Activated T-helper 2 cell treated with anti-CD3 and anti-CD28 coated beads, Interferon-gamma antibody, Interleukin-2, Interleukin-4, amounts not matched to agents 10 μg/mL and 5 μg/mL and 100 μg/mL, durations not matched to agents 14 hours and 24 hours and 36 hours (primary cell): ENCODE measurements at regions of chr17 and their contacts with region 1.

Region 1: DNA sequence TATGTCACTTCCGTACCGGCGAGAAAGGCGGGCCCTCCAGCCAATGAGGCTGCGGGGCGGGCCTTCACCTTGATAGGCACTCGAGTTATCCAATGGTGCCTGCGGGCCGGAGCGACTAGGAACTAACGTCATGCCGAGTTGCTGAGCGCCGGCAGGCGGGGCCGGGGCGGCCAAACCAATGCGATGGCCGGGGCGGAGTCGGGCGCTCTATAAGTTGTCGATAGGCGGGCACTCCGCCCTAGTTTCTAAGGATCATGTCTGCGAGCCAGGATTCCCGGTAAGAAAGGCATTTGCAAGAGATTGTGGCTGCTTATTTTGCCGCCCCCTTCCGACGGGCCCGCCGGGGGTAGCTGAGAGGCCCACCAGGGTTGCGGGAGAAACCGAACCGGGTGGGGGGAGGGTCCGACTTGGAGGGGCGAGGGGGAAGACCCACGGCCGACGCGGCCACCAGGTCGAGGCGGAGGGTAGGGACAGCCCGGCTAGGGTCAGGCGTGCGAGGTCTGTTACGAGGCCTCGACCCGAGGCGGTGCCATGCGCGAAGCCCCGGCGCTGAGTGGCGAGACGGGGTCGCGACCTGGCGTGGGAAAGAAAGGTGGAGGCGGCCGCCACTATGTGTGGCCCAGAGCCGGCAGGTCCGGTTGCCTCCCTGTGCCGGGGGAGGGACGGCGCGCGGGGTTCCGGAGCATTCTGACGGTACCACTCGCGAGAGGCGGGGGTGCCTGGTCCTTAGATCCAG is 6.7 kb upstream of the CD68 start:
- DNase-seq: peak; percentile 100
- H3K4me3 Mint-ChIP-seq: peak overlapping the region; percentile 93
- H3K27ac Mint-ChIP-seq: peak overlapping the region; percentile 97
- H3K4me1 Mint-ChIP-seq: peaks cover 48% of the 10 kb centered on the region
- H3K27me3 Mint-ChIP-seq: no peaks in the 10 kb centered on the region

Region 2: GRCh38 chr17:7239091-7240027 is 333.4 kb before region 1 on chr17 and contains the start of gene PHF23:
- intact Hi-C with region 1: loop called (anchors 2 kb)
- DNase-seq: peak; percentile 98
- H3K4me3 Mint-ChIP-seq: peak within 1 kb of the TSS; percentile 98
- H3K27ac Mint-ChIP-seq: peak within 1 kb of the TSS; percentile 92
- H3K4me1 Mint-ChIP-seq: peaks cover 48% of the 10 kb centered on the region
- H3K27me3 Mint-ChIP-seq: no peaks in the 10 kb centered on the region
- total RNA-seq, gene PHF23: 43.4 and 47.8 TPM in 2 replicates

Region 3: DNA sequence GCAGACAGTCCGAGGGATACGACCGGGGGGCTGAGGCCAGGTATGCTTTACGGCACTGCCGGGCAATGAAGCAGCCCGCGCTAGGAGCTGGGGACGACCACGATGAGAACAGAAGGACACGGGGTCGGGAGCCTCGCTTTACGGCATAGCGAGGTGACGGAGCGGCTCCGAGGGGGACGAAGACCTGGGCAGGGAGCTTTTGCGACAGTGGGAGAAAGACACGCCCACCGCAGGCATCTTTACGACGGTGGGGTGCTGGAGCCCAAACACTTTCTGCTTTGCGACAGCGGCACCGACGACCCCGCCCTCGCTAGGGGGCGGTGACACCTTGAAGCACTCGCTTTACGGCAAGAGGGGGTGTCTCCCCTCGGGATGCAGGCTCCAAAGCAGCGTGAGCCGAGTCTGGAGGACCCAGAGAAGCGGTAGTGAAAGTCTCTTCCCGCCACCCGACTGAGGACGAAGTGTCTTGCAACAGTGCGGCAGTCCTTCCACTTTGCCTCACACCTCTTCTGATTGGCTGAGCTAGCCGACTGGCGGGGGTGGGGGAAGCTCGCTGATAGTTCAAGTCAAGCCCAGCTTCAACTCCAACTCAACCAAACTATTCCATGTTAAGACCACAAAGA is 243.3 kb before region 1 on chr17:
- intact Hi-C with region 1: loop called (anchors 2 kb)
- DNase-seq: peak; percentile 96
- H3K4me3 Mint-ChIP-seq: peak overlapping the region; percentile 87
- H3K27ac Mint-ChIP-seq: peak overlapping the region; percentile 95
- H3K4me1 Mint-ChIP-seq: peaks cover 26% of the 10 kb centered on the region
- H3K27me3 Mint-ChIP-seq: no peaks in the 10 kb centered on the region

Region 4: DNA sequence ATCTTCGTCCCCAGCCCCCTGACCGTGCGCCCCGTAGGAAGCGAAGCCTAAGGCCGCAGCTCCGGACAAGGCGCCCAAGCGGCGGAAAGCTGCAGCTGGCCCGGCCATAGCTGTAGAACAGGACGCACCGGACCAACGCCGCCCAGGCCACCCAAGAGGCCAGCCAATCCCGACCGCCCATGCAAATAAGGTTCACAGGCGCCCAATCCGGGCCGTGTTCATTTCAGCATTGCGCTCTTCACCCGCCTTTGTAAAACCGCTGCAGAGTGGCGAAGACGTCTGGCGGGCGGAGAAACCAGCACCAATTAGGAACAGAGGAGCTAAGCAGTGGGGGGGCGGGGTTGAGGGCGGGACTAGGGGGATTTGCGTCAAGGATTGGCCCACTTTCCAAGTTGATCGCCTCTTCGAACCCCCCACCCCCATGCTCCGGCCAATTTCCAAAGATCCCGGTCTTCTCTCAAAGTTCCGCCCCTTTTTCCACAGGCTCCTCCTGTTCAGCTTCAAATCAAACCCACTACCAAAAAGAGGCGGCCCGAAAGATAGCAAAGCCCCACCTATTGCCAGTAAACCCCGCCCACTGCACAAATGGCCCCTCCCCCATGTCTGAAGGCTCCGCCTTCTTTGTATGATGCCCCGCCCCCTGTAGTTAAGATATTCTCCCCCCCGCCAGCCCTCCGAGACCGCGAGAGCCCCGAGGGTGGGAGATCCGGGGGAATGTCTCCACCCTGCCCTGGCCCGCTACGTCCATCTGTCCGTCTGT is 168.6 kb before region 1 on chr17 and contains the start of gene TMEM256:
- intact Hi-C with region 1: loop called (anchors 5 kb)
- DNase-seq: peak; percentile 95
- H3K4me3 Mint-ChIP-seq: peak within 1 kb of the TSS; percentile 87
- H3K27ac Mint-ChIP-seq: peak within 1 kb of the TSS; percentile 92
- H3K4me1 Mint-ChIP-seq: peaks cover 11% of the 10 kb centered on the region
- H3K27me3 Mint-ChIP-seq: peaks cover 13% of the 10 kb centered on the region
- total RNA-seq, gene TMEM256: 67.3 and 67.7 TPM in 2 replicates

Region 5: DNA sequence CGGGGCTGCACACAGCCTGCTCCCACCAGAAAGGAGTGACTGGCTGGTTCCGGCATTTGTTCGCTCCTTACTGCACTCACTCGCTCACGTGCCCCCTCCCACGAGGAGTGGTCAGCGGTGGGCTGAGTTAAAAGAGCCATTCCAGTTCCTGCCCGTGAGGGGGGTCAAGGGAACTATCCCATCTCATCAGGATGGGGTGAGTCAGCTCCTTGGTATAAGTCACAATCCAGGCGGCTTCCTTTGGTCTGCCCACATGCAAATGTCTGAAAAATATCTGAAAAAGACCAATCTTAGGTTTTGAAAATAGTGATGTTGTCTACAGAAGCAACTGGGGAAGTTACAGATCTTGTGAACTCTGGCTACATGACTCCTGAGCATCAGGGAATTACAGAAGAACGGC is 33.9 kb before region 1 on chr17:
- intact Hi-C with region 1: no loop called
- DNase-seq: no peak
- H3K4me3 Mint-ChIP-seq: no peak overlapping the region
- H3K27ac Mint-ChIP-seq: no peak overlapping the region
- H3K4me1 Mint-ChIP-seq: no peaks in the 10 kb centered on the region
- H3K27me3 Mint-ChIP-seq: peaks cover 17% of the 10 kb centered on the region

Region 6: DNA sequence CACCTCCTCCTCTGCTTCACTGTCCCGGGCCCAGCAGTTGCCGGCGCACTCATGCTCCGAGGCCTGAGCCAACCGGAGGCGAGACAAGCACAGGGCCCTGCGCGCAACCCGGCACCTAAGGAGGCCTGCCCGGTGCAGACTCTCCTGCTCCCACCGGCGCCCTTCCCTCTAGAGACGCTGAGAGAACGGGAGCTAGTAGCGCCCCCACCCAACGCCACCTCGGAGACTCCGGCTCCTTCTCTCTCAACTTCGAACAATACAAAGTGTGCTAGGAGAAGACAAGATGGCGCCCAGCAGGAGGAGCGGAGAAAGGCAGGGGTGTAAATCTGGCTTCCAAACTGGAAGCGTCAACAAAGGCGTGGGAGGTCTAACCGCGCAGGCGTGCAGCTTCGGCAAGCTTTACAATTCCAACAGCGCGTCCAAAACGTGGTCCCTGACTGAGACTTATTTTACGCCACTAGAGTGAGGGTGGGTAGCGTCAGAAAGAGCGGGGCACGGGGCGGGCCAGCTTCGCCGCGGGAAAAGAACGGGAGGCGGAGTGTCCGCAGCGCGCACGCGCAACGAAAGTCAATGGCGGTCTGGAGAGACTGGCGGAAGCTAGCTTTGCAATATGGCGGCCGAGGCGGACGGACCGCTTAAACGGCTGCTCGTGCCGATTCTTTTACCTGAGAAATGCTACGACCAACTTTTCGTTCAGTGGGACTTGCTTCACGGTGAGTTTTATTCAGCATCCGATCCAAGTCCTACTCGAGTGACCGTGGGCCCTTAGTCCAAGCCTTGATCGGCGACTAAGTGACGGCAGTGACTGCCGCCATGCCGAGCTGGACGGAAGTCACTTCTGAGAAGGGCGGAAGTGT is 10.7 kb after region 1 on chr17 and contains the start of gene MPDU1:
- intact Hi-C with region 1: loop called (anchors 1 kb)
- DNase-seq: peak; percentile 97
- H3K4me3 Mint-ChIP-seq: peak within 1 kb of the TSS; percentile 95
- H3K27ac Mint-ChIP-seq: peak within 1 kb of the TSS; percentile 100
- H3K4me1 Mint-ChIP-seq: peaks cover 43% of the 10 kb centered on the region
- H3K27me3 Mint-ChIP-seq: no peaks in the 10 kb centered on the region
- total RNA-seq, gene MPDU1: 98.6 and 106 TPM in 2 replicates

Region 7: GRCh38 chr17:7687908-7688807 is 115.4 kb after region 1 on chr17 and contains the start of gene WRAP53:
- intact Hi-C with region 1: loop called (anchors 2 kb)
- DNase-seq: peak; percentile 93
- H3K4me3 Mint-ChIP-seq: peak within 1 kb of the TSS; percentile 94
- H3K27ac Mint-ChIP-seq: peak within 1 kb of the TSS; percentile 97
- H3K4me1 Mint-ChIP-seq: peaks cover 34% of the 10 kb centered on the region
- H3K27me3 Mint-ChIP-seq: no peaks in the 10 kb centered on the region
- total RNA-seq, gene WRAP53: 33.2 and 34.5 TPM in 2 replicates